Activated CD4-positive, alpha-beta memory T cell treated with anti-CD3 and anti-CD28 coated beads for 36 hours (primary cell): ENCODE measurements at regions of chrX and their contacts with region 1.

Region 1: GRCh38 chrX:104270920-104271512 is 16.3 kb upstream of the ESX1 start:
- DNase-seq: peak; percentile 42
- H3K4me3 Mint-ChIP-seq: no peak overlapping the region
- H3K27ac Mint-ChIP-seq: no peak overlapping the region
- H3K4me1 Mint-ChIP-seq: peaks cover 2% of the 10 kb centered on the region
- H3K27me3 Mint-ChIP-seq: peaks cover 20% of the 10 kb centered on the region

Region 2: DNA sequence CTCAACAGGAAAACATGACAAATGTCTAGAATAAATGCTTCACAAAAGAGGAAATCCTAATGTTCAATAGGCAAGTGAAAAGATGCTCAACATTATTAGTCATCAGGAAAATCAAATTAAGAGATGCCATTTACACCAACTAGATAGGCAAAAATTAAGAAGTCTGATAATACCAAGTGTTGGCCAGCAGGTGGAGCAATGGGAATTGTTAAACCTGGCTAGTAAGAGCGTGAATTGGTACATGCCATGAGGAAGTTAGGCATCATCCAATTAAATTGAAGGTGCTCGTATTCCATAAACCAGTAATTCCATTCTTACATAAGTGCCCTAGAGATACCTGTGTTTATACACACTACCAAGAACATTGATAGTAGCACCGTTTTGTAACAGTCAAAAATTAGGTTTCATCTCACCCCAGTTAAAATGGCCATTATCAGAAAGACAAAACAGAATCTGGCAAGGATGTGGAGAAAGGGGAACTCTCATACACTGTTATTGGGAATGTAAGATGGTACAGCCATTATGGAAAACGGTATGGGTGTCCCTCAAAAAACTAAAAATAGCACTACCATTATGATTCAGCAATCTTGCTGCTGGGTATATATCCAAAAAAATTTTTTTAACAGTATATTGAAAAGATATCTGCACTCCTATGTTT is 172.7 kb before region 1 on chrX:
- CTCF ChIA-PET with region 1: no interaction called
- POLR2A ChIA-PET with region 1: no interaction called
- intact Hi-C with region 1: loop called (anchors 1 kb)
- DNase-seq: peak; percentile 48
- H3K4me3 Mint-ChIP-seq: no peak overlapping the region
- H3K27ac Mint-ChIP-seq: no peak overlapping the region
- H3K4me1 Mint-ChIP-seq: peaks cover 2% of the 10 kb centered on the region
- H3K27me3 Mint-ChIP-seq: no peaks in the 10 kb centered on the region

Region 3: GRCh38 chrX:104195489-104196084 is 75.4 kb before region 1 on chrX:
- CTCF ChIA-PET with region 1: interaction called, 6 read pairs
- POLR2A ChIA-PET with region 1: no interaction called
- intact Hi-C with region 1: loop called (anchors 1 kb)
- DNase-seq: no peak
- H3K4me3 Mint-ChIP-seq: no peak overlapping the region
- H3K27ac Mint-ChIP-seq: no peak overlapping the region
- H3K4me1 Mint-ChIP-seq: peaks cover 5% of the 10 kb centered on the region
- H3K27me3 Mint-ChIP-seq: no peaks in the 10 kb centered on the region

Region 4: DNA sequence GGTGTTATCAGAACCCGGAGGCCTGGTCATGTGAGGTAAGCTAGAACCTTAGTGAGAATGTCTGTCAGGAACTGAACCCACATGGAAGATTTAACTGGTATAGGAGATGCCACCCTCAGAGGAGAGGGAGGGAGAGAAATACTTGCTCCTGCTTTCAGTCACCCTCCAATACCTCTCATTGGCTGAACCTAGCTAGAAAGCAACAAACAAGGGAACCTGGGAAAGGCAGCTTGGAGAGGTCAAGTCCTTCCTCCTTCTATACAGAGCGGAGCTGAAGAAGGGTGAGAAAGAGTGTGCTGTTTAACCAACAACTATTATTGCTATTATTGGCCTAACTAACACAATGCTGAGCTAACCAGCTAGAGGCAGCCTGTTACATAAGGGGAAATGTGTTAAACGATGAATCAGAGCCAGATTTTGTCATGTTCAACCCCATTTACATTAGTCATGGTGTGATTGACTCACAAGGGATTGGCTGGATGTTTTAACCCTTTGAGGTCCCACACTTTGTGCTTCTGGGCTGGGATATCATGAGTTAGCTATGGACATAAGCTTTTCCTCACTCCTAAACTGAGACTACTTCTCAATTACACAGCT is 80.3 kb after region 1 on chrX:
- CTCF ChIA-PET with region 1: no interaction called
- POLR2A ChIA-PET with region 1: no interaction called
- intact Hi-C with region 1: no loop called
- DNase-seq: no peak
- H3K4me3 Mint-ChIP-seq: no peak overlapping the region
- H3K27ac Mint-ChIP-seq: no peak overlapping the region
- H3K4me1 Mint-ChIP-seq: no peaks in the 10 kb centered on the region
- H3K27me3 Mint-ChIP-seq: peaks cover 3% of the 10 kb centered on the region